GM10248 (cell line): ENCODE measurements at regions of chr6 and their contacts with region 1.

Region 1: GRCh38 chr6:111210194-111210728 is 123.0 kb downstream of the SLC16A10 start:
- DNase-seq: peak; percentile 68
- CTCF ChIP-seq: peak; percentile 66

Region 2: DNA sequence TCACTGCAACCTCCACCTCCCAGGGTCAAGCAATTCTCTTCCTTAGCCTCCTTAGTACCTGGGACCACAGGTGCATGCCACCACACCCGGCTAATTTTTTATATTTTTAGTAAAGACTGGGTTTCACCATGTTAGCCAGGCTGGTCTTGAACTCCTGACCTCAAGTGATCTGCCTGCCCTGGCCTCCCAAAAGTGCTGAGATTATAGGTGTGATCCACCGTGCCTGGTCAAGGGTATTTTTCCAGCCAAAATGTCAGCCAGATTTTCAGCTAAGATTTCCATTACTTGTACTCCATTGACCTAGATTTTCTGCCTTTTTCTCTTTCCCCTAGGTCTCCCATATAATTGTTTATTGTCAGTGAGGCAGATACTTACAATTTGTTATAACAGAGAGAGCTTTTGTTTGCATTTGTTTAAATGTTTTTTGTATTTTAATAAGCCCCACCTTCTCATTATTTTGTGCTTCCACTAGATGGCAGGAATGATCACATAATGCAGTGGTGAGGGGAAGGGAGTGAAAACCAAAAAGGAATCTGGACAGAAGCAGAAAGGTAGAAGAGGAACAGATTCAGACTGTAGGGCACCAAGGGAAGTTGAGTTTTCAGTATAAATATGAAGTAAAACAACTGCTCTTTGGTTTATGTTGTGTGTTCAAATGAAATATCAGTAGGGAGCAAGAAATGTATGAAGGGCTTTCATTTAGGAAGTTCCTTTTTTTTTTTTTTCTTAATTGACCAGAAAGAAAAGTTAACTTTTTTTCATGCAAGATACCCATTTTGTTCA is 198.7 kb before region 1 on chr6:
- CTCF ChIA-PET with region 1: interaction called, 40 read pairs
- POLR2A ChIA-PET with region 1: no interaction called
- DNase-seq: peak; percentile 58
- CTCF ChIP-seq: peak; percentile 58

Region 3: DNA sequence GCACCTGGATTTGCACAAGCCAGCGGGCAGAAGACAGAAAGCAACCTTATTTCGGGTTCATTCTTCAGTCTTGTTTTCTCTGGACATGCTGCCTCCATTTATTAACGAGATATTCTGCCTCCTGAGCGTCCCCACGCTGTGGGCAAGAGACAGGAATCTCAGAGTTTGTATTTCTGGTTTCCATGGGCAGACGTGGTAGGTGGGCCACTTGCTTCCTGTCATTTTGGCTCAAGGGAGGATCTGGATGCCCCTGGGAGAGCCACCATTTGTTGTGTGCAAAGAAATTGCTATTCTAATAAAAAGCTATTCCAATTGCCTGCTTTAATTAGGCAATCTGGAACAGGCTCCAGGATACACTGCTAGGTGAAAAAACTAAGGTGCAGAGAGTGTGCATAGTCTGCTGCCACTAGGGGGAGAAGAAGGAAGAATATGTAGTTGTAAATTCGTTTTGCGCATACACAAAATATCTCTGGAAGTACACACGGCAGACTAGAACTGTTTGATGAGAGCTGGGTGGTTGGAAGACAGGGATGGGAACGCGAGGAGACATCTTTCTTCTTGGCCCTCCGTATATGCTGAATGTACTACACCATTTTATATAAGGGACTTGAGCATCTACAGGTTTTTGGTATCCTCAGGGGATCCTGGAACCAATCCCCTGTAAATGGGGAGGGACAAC is 153.0 kb before region 1 on chr6:
- CTCF ChIA-PET with region 1: interaction called, 26 read pairs
- POLR2A ChIA-PET with region 1: no interaction called
- DNase-seq: peak; percentile 48
- CTCF ChIP-seq: peak; percentile 84

Region 4: GRCh38 chr6:111183702-111184517 is 26.4 kb before region 1 on chr6:
- CTCF ChIA-PET with region 1: interaction called, 11 read pairs
- POLR2A ChIA-PET with region 1: no interaction called
- DNase-seq: no peak
- CTCF ChIP-seq: no peak

Region 5: DNA sequence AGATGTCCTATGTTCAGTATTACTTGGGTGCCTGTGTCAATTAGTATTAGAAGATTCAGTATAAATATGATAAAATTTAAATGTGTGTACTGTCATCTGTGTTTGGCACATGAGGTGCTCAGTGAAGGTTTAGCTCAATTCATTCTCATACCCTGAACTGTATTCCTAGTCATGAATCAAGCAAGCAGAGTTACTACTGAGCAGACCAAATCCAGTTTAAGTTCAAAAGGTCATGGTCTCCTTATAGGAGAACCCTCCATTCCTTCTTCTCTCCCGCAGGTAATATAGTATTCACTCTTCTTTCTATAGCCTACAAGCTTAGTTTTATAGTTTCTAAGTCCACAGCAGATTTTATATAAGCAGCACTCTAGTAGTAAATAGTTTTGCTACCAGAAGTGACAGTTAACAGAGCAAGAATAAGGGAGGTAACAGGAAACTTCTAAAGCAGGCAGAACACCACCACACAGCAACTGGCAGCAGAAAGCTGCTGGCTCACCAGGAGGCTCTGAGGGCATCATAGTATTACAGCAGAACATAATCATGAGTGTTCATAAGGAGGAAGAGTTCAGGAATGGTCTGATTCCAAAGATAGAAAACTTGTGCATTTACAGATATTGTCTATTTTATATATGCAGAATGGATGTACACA is 10.2 kb after region 1 on chr6:
- CTCF ChIA-PET with region 1: interaction called, 26 read pairs
- POLR2A ChIA-PET with region 1: no interaction called
- DNase-seq: no peak
- CTCF ChIP-seq: no peak